Psoas muscle (tissue), 8 donors: ENCODE measurements at regions of chr10 and their contacts with region 1.

Region 1: DNA sequence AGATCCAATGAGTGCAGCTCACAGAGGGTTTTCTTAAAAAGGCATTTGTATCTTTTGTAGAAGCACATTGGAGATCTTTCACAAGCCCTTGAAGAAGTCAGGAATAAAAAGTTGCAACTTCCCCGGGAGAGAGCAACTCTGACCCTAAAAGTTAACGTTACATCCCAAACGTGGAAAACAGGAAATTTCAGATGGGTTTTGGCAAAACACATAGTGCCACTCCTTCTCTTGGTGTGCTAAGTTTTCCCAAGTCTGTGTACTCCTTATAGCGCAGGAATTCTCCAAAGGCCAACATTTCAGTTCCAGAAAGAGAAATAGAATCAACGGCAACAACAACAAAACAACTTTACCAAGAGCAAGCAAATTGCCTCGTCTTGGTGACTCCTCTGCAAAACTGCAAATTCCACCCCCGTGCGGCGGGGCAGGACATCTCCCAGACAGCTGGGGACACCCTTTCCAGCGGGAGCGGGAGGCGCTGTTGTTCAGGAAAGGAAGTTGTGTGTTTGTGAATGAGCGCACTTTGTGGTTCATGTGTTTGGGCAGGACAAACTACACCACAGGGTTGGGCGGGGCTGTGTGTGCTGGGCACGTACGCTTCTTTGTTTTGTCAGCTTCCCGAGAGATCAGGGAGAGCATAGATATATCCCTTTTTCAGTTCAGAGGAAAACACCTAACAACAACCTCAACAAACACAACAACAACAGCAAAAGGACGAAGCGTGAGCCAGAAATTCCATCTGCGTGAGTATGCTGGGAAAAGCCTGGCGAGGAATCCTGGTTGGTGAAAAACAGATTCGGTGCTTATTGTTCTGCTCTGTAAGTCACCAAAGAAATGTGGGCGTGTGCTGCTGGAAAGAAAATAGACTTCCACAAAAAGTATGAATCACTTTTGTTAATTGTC is 294.7 kb upstream of the PITRM1 start:
- DNase-seq: peak; percentile 84 to 90
- ATAC-seq: peak; percentile 68 to 77 (median 72)
- H3K4me3 ChIP-seq: peak overlapping the region; percentile 60
- H3K27ac ChIP-seq: peak overlapping the region; percentile 91
- H3K4me1 ChIP-seq: peaks cover 41% of the 10 kb centered on the region
- H3K27me3 ChIP-seq: no peaks in the 10 kb centered on the region
- CTCF ChIP-seq: peak; percentile 60

Region 2: DNA sequence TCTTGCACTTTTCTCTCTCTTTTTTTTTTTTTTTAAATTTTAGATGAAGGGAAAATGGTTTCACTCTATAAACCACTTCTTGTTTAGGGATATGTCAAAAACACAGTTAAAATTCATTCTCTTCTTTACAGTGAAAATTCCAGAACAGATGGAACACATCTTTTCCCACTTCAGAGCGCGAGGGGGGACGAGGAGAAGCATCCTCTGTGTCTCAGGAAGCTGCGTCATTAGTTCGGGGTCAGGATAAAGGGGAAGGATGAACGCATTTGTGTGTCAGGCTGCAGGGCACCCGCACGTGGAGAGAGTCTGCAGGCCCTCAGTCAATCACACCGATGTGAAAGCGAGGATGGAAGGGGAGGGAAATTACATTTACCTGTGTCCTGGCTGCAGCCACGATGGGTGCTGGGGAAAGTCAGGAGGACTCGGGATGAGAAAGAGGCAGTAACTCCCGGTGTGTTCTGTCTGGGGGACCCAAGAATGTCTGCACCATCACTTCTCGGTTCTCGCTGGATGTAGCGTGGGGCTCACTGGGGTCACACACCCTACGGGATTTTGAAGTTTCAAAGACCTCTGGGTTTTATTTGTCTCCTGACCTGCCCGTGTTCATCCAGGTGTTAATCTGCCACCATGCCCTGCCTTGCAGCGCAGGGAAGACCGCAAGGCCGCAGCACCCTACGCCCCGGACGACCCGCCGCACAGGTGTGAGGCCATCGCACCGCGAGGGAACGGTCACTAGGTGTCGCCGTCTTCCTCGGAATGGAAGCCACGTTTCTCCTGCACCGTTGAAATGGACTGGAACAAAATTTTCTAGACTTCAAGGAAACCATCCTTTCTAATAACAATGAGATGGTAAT is 228.0 kb before region 1 on chr10:
- intact Hi-C with region 1: loop called in 1 of 2 experiments (anchors 5 kb)
- DNase-seq: peak; percentile 72 to 83
- ATAC-seq: peak; percentile 84 to 97 (median 88)
- H3K4me3 ChIP-seq: peak overlapping the region; percentile 34
- H3K27ac ChIP-seq: peak overlapping the region; percentile 58
- H3K4me1 ChIP-seq: no peaks in the 10 kb centered on the region
- H3K27me3 ChIP-seq: peaks cover 0 to 4% (median 0%) of the 10 kb centered on the region in 3 donors
- CTCF ChIP-seq: peak; percentile 93

Region 3: GRCh38 chr10:3499120-3499519 is 31.8 kb after region 1 on chr10:
- intact Hi-C with region 1: loop called in 1 of 2 experiments (anchors 2 kb)
- DNase-seq: no peak
- ATAC-seq: peak in 3 of 4 donors; percentile 36 to 64 (median 55)
- H3K4me3 ChIP-seq: no peak overlapping the region
- H3K27ac ChIP-seq: no peak overlapping the region
- H3K4me1 ChIP-seq: peaks cover 27% of the 10 kb centered on the region
- H3K27me3 ChIP-seq: no peaks in the 10 kb centered on the region
- CTCF ChIP-seq: no peak

Region 4: GRCh38 chr10:3525832-3526449 is 58.6 kb after region 1 on chr10:
- intact Hi-C with region 1: loop called in 1 of 2 experiments (anchors 5 kb)
- DNase-seq: peak; percentile 44 to 62
- ATAC-seq: peak; percentile 90 to 96 (median 95)
- H3K4me3 ChIP-seq: no peak overlapping the region
- H3K27ac ChIP-seq: peak overlapping the region; percentile 59
- H3K4me1 ChIP-seq: peaks cover 17% of the 10 kb centered on the region
- H3K27me3 ChIP-seq: no peaks in the 10 kb centered on the region
- CTCF ChIP-seq: no peak

Region 5: DNA sequence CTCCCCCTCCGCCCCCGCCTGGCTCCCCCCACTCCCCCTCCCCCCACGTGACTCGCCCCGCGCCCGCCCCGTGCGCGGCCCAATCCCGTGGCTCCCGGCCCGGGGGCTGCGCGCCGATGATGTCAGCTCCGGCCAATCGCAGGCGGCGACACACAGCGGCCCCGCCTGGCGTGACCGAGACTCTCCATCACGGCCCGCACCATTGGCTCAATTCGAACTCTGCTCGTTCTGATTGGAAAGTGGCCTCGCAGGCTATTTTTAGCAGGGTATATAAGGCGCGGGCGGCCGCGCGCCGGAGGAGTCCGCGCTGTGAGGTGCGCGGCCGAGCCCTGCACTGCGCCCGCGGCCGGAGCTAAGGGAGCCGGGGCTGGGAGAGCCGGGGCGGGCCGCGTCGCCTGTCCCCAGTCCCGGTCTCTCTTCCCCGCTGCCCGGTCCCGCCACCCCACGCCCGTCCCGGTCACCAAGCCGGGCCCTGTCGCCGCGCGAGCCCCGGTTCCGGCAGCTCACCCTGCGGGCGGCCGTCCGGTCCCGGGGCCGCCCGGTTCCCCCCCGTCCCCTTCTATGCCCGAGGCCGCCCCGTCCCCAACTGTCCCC is 318.1 kb after region 1 on chr10:
- intact Hi-C with region 1: loop called in 1 of 2 experiments (anchors 2 kb)
- DNase-seq: peak; percentile 99 to 100
- ATAC-seq: peak; percentile 69 to 84 (median 78)
- H3K4me3 ChIP-seq: peak overlapping the region; percentile 95
- H3K27ac ChIP-seq: peak overlapping the region; percentile 100
- H3K4me1 ChIP-seq: peaks cover 10% of the 10 kb centered on the region
- H3K27me3 ChIP-seq: no peaks in the 10 kb centered on the region
- CTCF ChIP-seq: no peak

Region 6: GRCh38 chr10:3906511-3907111 is 439.3 kb after region 1 on chr10:
- intact Hi-C with region 1: loop called in 1 of 2 experiments (anchors 5 kb)
- DNase-seq: peak; percentile 30 to 70
- ATAC-seq: peak in 2 of 4 donors; percentile 57 to 59
- H3K4me3 ChIP-seq: no peak overlapping the region
- H3K27ac ChIP-seq: peak overlapping the region; percentile 15
- H3K4me1 ChIP-seq: no peaks in the 10 kb centered on the region
- H3K27me3 ChIP-seq: no peaks in the 10 kb centered on the region
- CTCF ChIP-seq: no peak

Region 7: DNA sequence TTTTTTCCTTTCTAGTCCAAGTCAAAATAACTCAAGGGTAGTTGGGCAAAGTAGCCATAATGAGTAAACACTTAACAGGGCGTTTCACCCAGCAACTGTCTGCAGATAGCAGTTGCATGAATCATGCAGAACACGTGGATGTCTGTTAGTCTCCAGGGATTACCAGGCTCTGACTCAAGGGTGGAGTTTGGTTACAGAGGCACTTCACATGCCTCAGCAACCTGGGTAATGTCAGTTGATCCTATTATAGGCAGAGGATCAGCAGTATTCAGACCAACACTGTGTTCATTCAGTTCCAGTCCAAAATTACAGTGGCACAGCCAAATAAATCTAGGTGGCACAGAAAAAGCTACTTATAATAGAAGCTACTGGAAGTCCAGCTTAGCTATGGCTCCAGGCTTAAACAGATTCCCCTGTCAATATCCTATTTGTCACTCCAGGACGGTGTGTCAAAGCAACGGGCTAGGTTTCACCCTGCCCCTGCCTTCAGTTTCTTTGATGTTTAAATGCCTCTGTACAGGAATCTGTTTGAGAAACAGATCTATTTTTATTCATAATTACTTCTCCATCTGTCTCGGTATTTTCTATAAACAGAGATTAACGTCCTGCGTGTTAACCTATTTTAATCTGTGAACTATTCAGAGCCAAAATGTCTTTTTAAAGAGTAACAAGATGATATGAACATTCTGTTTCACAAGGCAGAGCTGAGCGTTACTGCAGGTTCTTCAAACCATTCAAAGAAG is 1196.0 kb after region 1 on chr10:
- intact Hi-C with region 1: loop called in 1 of 2 experiments (anchors 2 kb)
- DNase-seq: peak; percentile 52 to 70
- ATAC-seq: peak; percentile 81 to 91 (median 85)
- H3K4me3 ChIP-seq: peak overlapping the region; percentile 55
- H3K27ac ChIP-seq: peak overlapping the region; percentile 91
- H3K4me1 ChIP-seq: peaks cover 38% of the 10 kb centered on the region
- H3K27me3 ChIP-seq: no peaks in the 10 kb centered on the region
- CTCF ChIP-seq: no peak